Esophagus squamous epithelium (tissue), 5 donors: ENCODE measurements at regions of chr13 and their contacts with region 1.

Region 1: DNA sequence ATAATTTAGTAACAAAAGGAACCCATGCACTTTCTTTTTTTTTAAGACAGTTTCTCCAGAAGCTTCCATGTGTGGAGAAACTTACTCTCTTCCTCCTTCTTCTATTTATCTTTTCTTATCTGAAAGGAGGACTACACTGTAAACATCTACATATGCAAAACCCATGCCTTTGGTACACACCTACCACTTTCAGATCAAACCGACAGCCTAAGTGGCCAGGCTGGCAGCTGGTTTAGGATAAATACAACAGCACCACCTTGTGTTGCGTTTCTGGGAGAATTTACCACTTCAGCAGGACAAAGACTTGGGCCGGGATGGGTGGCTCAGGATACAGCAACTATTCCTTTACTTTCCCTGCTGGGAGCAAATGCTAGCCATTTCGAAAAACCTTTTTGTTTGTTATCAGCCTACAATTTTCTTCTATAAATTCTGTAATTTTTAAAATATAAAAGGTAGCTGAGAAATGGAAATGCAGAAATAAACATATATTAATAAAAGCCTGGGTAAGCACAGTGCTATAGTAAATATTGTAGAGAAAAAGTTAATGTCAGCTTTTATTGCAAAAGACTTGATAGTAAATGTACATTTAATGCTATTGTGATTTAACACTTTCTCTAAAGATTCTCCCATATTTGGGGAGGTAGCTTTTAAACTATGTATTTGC is 94.0 kb upstream of the RFC3 start:
- DNase-seq: peak; percentile 13
- H3K4me3 ChIP-seq: no peak overlapping the region
- H3K27ac ChIP-seq: peak overlapping the region in 2 of 4 donors; percentile 47 to 62
- H3K4me1 ChIP-seq: peaks cover 6 to 41% (median 13%) of the 10 kb centered on the region in 3 donors
- H3K27me3 ChIP-seq: no peaks in the 10 kb centered on the region
- CTCF ChIP-seq: peak in 5 of 6 experiments; percentile 69 to 82 (median 80)
- POLR2A ChIP-seq: no peak

Region 2: GRCh38 chr13:33542283-33543088 is 181.4 kb before region 1 on chr13:
- intact Hi-C with region 1: loop called (anchors 10 kb)
- DNase-seq: peak; percentile 90
- H3K4me3 ChIP-seq: peak overlapping the region; percentile 32 to 67 (median 56)
- H3K27ac ChIP-seq: peak overlapping the region; percentile 93 to 99 (median 96)
- H3K4me1 ChIP-seq: peaks cover 11 to 34% (median 22%) of the 10 kb centered on the region in 3 donors
- H3K27me3 ChIP-seq: no peaks in the 10 kb centered on the region
- CTCF ChIP-seq: peak; percentile 86 to 97 (median 92)
- POLR2A ChIP-seq: peak in 3 of 4 donors; percentile 3 to 63 (median 21)